CD4-positive, alpha-beta T cell (primary cell): ENCODE measurements at regions of chr19 and their contacts with region 1.

Region 1: GRCh38 chr19:14059093-14059480 is 2.8 kb downstream of the PALM3 start:
- DNase-seq: peak in 11 of 14 experiments; percentile 31 to 74 (median 39)
- ATAC-seq: peak; percentile 59
- H3K4me3 ChIP-seq: no peak overlapping the region
- H3K4me3 Mint-ChIP-seq: peak overlapping the region; percentile 58
- H3K27ac ChIP-seq: no peak overlapping the region
- H3K27ac Mint-ChIP-seq: no peak overlapping the region
- H3K4me1 ChIP-seq: peaks cover 24% of the 10 kb centered on the region
- H3K4me1 Mint-ChIP-seq: peaks cover 16% of the 10 kb centered on the region
- H3K27me3 ChIP-seq: peaks cover 28 to 32% of the 10 kb centered on the region in 2 experiments
- H3K27me3 Mint-ChIP-seq: peaks cover 34% of the 10 kb centered on the region
- CTCF ChIP-seq: peak; percentile 72

Region 2: DNA sequence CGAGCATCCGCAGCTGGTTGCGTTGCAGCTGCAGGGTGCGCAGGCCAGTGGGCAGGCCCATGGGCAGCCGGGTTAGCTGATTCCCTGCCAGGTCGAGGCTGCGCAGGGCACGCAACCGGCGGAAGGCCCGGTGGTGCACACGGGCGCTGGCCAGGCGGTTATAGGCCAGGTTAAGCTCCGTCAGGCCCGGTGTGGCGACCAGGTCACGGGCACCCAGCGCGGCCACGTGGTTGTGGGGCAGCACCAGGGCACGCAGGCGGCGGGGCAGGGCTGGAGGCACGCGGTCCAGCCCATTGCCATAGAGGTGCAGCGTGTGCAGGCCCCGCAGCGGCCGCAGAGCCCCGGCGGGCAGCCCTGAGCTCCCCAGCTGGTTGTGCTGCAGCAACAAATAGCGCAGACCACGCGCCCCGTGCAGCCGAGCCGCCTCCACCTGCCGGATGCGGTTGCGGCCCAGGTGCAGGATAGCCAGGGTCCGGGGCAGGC is 126.1 kb before region 1 on chr19:
- CTCF ChIA-PET with region 1: no interaction called
- POLR2A ChIA-PET with region 1: no interaction called
- intact Hi-C with region 1: no loop called
- DNase-seq: no peak
- ATAC-seq: no peak
- H3K4me3 ChIP-seq: no peak overlapping the region
- H3K4me3 Mint-ChIP-seq: no peak overlapping the region
- H3K27ac ChIP-seq: no peak overlapping the region
- H3K27ac Mint-ChIP-seq: no peak overlapping the region
- H3K4me1 ChIP-seq: peaks cover 5% of the 10 kb centered on the region
- H3K4me1 Mint-ChIP-seq: no peaks in the 10 kb centered on the region
- H3K27me3 ChIP-seq: peaks cover 4 to 7% of the 10 kb centered on the region in 2 experiments
- H3K27me3 Mint-ChIP-seq: peaks cover 11% of the 10 kb centered on the region
- CTCF ChIP-seq: no peak

Region 3: GRCh38 chr19:14048443-14049153 is 10.5 kb before region 1 on chr19:
- CTCF ChIA-PET with region 1: interaction called, 17 read pairs
- POLR2A ChIA-PET with region 1: interaction called, 3 read pairs
- intact Hi-C with region 1: no loop called
- DNase-seq: peak; percentile 53 to 84 (median 73)
- ATAC-seq: peak; percentile 94
- H3K4me3 ChIP-seq: no peak overlapping the region
- H3K4me3 Mint-ChIP-seq: no peak overlapping the region
- H3K27ac ChIP-seq: no peak overlapping the region
- H3K27ac Mint-ChIP-seq: peak overlapping the region; percentile 67
- H3K4me1 ChIP-seq: peaks cover 8% of the 10 kb centered on the region
- H3K4me1 Mint-ChIP-seq: peaks cover 10% of the 10 kb centered on the region
- H3K27me3 ChIP-seq: no peaks in the 10 kb centered on the region
- H3K27me3 Mint-ChIP-seq: no peaks in the 10 kb centered on the region
- CTCF ChIP-seq: peak; percentile 97

Region 4: GRCh38 chr19:14440049-14440448 is 381.0 kb after region 1 on chr19:
- CTCF ChIA-PET with region 1: no interaction called
- POLR2A ChIA-PET with region 1: no interaction called
- intact Hi-C with region 1: no loop called
- DNase-seq: peak; percentile 58 to 89 (median 76)
- ATAC-seq: peak; percentile 100
- H3K4me3 ChIP-seq: peak overlapping the region; percentile 90
- H3K4me3 Mint-ChIP-seq: peak overlapping the region; percentile 93
- H3K27ac ChIP-seq: peak overlapping the region; percentile 66 to 72
- H3K27ac Mint-ChIP-seq: peak overlapping the region; percentile 91
- H3K4me1 ChIP-seq: peaks cover 69% of the 10 kb centered on the region
- H3K4me1 Mint-ChIP-seq: peaks cover 59% of the 10 kb centered on the region
- H3K27me3 ChIP-seq: no peaks in the 10 kb centered on the region
- H3K27me3 Mint-ChIP-seq: no peaks in the 10 kb centered on the region
- CTCF ChIP-seq: no peak